Activated CD4-positive, alpha-beta memory T cell treated with anti-CD3 and anti-CD28 coated beads for 36 hours (primary cell): ENCODE measurements at regions of chr1 and their contacts with region 1.

Region 1: DNA sequence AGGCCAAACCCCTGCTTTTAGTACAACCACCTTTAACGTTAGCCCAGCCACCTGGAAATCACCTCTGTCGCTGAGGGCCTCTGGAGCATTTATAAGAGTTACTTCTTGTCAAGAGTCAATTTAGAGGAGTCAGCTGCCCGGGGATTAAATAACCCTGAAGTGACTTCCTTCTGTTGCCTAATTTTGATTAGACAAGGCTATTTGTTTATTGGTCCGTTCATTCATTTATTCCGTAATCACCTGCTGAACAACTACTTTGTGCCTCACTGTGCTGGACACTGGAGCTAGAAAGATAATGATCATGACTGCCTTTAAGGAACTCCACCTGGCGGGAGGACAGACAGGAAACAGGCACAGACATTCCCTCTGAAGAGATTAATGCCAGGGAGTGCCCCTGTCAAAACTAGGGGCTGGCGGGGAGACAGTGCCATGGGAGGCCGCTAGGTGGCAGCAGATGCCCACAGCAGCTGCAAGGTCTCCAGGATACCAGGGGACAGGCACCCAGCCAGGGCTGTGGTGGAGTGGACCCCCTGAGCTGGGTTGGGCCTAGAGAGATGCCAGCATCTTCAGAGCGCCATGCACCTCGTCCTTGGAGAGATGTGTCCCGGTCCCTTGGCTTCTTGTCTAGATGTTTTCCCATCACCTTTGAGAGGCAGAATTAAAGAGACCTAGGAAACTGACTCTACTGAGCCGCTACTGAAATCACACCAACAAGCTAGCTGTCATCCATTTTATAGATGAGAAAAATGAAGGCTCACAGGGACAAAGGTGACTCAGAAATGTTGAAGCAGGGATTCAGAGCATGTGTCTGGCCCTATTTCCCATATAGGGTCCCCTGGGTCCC is 3.7 kb downstream of the REN start:
- DNase-seq: peak; percentile 86
- H3K4me3 Mint-ChIP-seq: no peak overlapping the region
- H3K27ac Mint-ChIP-seq: no peak overlapping the region
- H3K4me1 Mint-ChIP-seq: no peaks in the 10 kb centered on the region
- H3K27me3 Mint-ChIP-seq: peaks cover 6% of the 10 kb centered on the region

Region 2: DNA sequence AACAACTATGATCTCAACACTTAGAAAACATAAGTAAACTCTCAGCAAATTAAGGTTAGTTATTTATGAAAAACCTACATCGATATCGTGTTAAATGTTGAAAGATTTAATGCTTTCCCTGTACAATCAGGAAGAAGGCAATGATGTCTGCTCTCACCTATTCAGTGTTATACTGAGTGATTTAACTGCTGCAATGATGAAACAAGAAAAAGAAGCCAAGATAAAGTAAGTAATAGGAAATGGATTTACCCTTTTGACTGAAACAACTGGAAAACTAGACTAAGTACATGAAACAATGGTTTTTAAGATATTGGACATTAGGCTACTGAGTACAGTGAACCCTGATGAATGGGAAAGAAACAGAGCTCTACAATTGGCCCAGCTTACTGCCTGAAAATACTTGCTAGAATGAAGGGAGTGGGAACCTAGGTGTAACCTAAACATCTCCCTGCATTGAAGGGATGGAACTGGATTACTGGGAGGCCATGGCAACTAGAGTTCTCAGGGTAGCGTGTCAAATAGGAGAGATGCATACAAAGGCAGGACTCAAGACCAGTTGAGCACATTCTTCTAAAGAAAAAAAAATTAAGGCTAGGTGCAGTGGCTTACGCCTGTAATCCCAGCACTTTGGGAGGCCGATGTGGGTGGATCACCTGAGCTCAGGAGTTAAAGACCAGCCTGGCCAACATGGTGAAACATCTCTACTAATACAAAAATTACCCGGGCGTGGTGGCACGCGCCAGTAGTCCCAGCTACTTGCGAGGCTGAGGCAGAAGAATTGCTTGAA is 263.8 kb before region 1 on chr1:
- CTCF ChIA-PET with region 1: no interaction called
- POLR2A ChIA-PET with region 1: no interaction called
- intact Hi-C with region 1: no loop called
- DNase-seq: no peak
- H3K4me3 Mint-ChIP-seq: no peak overlapping the region
- H3K27ac Mint-ChIP-seq: no peak overlapping the region
- H3K4me1 Mint-ChIP-seq: no peaks in the 10 kb centered on the region
- H3K27me3 Mint-ChIP-seq: no peaks in the 10 kb centered on the region

Region 3: GRCh38 chr1:203911806-203912205 is 250.6 kb before region 1 on chr1:
- CTCF ChIA-PET with region 1: no interaction called
- POLR2A ChIA-PET with region 1: no interaction called
- intact Hi-C with region 1: no loop called
- DNase-seq: no peak
- H3K4me3 Mint-ChIP-seq: no peak overlapping the region
- H3K27ac Mint-ChIP-seq: no peak overlapping the region
- H3K4me1 Mint-ChIP-seq: no peaks in the 10 kb centered on the region
- H3K27me3 Mint-ChIP-seq: no peaks in the 10 kb centered on the region

Region 4: DNA sequence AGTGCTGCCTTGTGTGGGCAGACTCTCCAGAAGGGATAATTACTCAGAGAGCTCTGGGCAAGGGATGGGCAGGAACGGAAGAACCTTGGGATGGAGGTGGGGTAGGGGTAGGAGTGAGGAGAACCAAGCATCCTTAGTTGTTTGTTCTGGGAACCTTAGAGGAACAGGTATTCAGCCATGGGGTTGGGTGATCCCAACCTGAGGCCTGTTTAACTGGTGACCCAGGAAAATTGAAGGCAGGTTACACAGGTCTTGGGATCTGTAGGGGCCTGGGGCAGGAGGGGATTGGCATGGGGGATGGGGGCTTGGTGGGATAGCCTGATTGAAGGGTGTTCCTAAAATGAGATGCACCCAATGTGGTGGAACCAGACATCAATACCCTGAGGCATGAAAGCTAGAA is 18.1 kb after region 1 on chr1:
- CTCF ChIA-PET with region 1: interaction called, 14 read pairs
- POLR2A ChIA-PET with region 1: no interaction called
- intact Hi-C with region 1: no loop called
- DNase-seq: no peak
- H3K4me3 Mint-ChIP-seq: no peak overlapping the region
- H3K27ac Mint-ChIP-seq: no peak overlapping the region
- H3K4me1 Mint-ChIP-seq: no peaks in the 10 kb centered on the region
- H3K27me3 Mint-ChIP-seq: peaks cover 1% of the 10 kb centered on the region

Region 5: DNA sequence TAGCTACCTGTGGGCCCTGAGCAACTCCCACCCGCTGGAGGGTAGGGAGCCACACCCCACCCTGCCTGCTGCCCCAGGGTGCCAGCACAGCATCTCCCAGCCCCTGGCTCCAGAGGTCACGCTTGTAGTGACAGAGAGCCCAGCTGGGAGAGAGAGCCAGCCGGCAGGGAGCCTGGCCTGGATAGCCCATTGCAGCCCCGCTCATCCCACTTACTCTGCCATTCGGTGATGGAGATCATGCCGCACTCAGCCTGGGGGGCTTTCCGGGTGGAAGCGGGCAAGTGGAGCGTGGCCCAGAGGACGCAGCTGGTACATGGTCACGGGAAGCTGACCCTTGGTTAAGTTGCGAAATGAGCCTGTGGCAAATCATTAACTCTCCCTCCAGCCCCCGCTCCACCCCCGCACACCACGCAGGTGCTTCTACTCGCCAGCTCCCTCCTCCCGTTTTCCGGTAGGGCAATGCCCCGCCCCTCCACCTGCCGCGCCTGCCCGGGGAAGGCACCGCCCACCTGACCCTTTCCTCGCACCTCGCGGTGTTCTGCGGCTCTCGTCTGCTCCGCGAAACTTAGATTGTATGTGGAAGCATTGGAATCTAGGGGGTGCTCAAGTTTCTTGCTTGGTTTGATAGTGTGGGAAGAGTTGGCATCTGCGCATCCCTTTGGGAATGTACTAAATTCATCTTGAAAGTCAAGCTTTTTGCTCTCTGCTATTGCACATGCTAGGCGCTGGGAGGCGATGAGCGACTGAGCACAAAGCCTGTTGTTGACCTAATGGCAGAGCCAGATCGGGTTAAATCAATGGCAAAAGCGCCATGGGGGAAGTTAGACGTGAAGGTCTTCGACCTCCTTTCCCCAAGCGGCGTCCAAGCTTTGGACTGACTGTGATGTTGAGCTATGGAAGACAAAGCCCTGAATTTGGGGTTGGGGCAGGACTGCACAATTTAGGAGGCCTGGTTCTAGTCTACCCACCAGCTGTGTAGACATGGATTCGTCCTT is 51.5 kb after region 1 on chr1 and contains the start of gene GOLT1A:
- CTCF ChIA-PET with region 1: interaction called, 13 read pairs
- POLR2A ChIA-PET with region 1: no interaction called
- intact Hi-C with region 1: no loop called
- DNase-seq: peak; percentile 68
- H3K4me3 Mint-ChIP-seq: peak within 1 kb of the TSS; percentile 40
- H3K27ac Mint-ChIP-seq: no peak within 1 kb of the TSS
- H3K4me1 Mint-ChIP-seq: peaks cover 3% of the 10 kb centered on the region
- H3K27me3 Mint-ChIP-seq: peaks cover 4% of the 10 kb centered on the region
- total RNA-seq, gene GOLT1A: 0.27 TPM in 1 of 2 experiments, not detected in the other

Region 6: DNA sequence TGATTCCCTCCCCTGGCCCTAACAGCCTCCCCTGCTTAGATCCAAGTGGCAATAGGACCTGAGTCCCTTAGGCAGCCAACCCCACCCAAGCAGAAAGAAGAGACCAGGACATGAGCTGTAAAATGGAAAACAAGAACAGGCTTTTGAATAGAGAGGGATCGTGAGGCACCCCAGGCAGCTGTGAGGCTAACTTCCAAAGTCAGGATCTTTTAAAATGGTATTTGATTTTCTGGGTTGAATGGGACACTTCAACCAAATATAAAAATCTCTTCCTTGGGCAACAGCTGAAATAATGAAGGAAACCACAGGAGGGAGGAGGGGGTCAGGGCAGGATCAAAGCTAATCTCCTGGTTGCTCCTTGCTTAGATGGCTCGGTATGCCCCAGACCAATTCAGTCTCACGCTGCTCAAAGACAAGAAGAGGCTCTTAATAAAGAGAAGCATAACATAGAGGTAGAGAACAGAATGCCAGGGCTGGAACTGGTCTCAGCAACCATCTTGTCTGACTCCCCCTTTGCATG is 1983.4 kb after region 1 on chr1:
- CTCF ChIA-PET with region 1: no interaction called
- POLR2A ChIA-PET with region 1: no interaction called
- intact Hi-C with region 1: no loop called
- DNase-seq: no peak
- H3K4me3 Mint-ChIP-seq: no peak overlapping the region
- H3K27ac Mint-ChIP-seq: no peak overlapping the region
- H3K4me1 Mint-ChIP-seq: no peaks in the 10 kb centered on the region
- H3K27me3 Mint-ChIP-seq: peaks cover 10% of the 10 kb centered on the region